Caco-2 (cell line): ENCODE measurements at regions of chr3 and their contacts with region 1.

Region 1: GRCh38 chr3:151918253-151919029 is 45.0 kb downstream of the SUCNR1 start:
- DNase-seq: peak in 1 of 2 experiments; percentile 24
- H3K4me3 ChIP-seq: no peak overlapping the region
- H3K4me3 Mint-ChIP-seq: no peak overlapping the region
- H3K27ac Mint-ChIP-seq: peak overlapping the region; percentile 39
- H3K4me1 ChIP-seq: no peaks in the 10 kb centered on the region
- H3K4me1 Mint-ChIP-seq: peaks cover 6% of the 10 kb centered on the region
- H3K27me3 ChIP-seq: no peaks in the 10 kb centered on the region
- H3K27me3 Mint-ChIP-seq: no peaks in the 10 kb centered on the region
- CTCF ChIP-seq: peak; percentile 48 to 62

Region 2: GRCh38 chr3:151168269-151169094 is 750.0 kb before region 1 on chr3:
- CTCF ChIA-PET with region 1: no interaction called
- POLR2A ChIA-PET with region 1: no interaction called
- intact Hi-C with region 1: loop called (anchors 5 kb)
- DNase-seq: peak; percentile 75 to 84
- H3K4me3 ChIP-seq: no peak overlapping the region
- H3K4me3 Mint-ChIP-seq: no peak overlapping the region
- H3K27ac Mint-ChIP-seq: no peak overlapping the region
- H3K4me1 ChIP-seq: no peaks in the 10 kb centered on the region
- H3K4me1 Mint-ChIP-seq: peaks cover 6% of the 10 kb centered on the region
- H3K27me3 ChIP-seq: no peaks in the 10 kb centered on the region
- H3K27me3 Mint-ChIP-seq: no peaks in the 10 kb centered on the region
- CTCF ChIP-seq: peak; percentile 89 to 94

Region 3: GRCh38 chr3:151290673-151291072 is 627.8 kb before region 1 on chr3:
- CTCF ChIA-PET with region 1: no interaction called
- POLR2A ChIA-PET with region 1: no interaction called
- intact Hi-C with region 1: loop called (anchors 2 kb)
- DNase-seq: no peak
- H3K4me3 ChIP-seq: no peak overlapping the region
- H3K4me3 Mint-ChIP-seq: no peak overlapping the region
- H3K27ac Mint-ChIP-seq: no peak overlapping the region
- H3K4me1 ChIP-seq: peaks cover 5% of the 10 kb centered on the region; the same call in 1 of the 2 replicates
- H3K4me1 Mint-ChIP-seq: no peaks in the 10 kb centered on the region
- H3K27me3 ChIP-seq: no peaks in the 10 kb centered on the region
- H3K27me3 Mint-ChIP-seq: no peaks in the 10 kb centered on the region
- CTCF ChIP-seq: peak in 1 of 2 experiments; percentile 26

Region 4: GRCh38 chr3:151379083-151379734 is 539.2 kb before region 1 on chr3:
- CTCF ChIA-PET with region 1: no interaction called
- POLR2A ChIA-PET with region 1: no interaction called
- intact Hi-C with region 1: loop called (anchors 1 kb)
- DNase-seq: peak; percentile 36 to 50
- H3K4me3 ChIP-seq: no peak overlapping the region
- H3K4me3 Mint-ChIP-seq: no peak overlapping the region
- H3K27ac Mint-ChIP-seq: no peak overlapping the region
- H3K4me1 ChIP-seq: no peaks in the 10 kb centered on the region
- H3K4me1 Mint-ChIP-seq: peaks cover 6% of the 10 kb centered on the region
- H3K27me3 ChIP-seq: no peaks in the 10 kb centered on the region
- H3K27me3 Mint-ChIP-seq: no peaks in the 10 kb centered on the region
- CTCF ChIP-seq: peak; percentile 54 to 85

Region 5: DNA sequence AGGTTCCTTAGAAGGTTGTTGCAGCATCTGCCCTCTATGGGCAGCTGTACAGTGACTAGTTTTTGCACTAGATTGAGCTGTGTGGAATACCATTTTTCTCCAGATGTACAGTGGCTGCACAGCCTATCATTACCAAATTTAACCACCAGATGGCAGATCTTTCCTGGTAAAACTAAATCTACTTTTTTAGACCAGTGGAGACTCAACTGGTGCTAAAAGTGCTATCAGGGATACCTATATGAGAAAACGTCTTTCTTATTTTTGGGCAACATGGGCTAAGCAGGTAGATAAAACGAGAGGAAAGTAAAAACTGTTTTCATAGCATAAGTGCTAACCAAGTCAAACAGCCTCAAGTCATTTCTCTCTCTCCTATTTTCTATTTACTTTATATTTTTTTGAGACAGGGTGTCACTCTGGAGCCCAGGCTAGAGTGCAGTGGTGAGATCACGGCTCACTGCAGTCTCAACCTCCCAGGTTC is 478.8 kb before region 1 on chr3:
- CTCF ChIA-PET with region 1: interaction called, 4 read pairs
- POLR2A ChIA-PET with region 1: no interaction called
- intact Hi-C with region 1: loop called (anchors 1 kb)
- DNase-seq: peak in 1 of 2 experiments; percentile 74
- H3K4me3 ChIP-seq: no peak overlapping the region
- H3K4me3 Mint-ChIP-seq: no peak overlapping the region
- H3K27ac Mint-ChIP-seq: no peak overlapping the region
- H3K4me1 ChIP-seq: no peaks in the 10 kb centered on the region
- H3K4me1 Mint-ChIP-seq: no peaks in the 10 kb centered on the region
- H3K27me3 ChIP-seq: no peaks in the 10 kb centered on the region
- H3K27me3 Mint-ChIP-seq: no peaks in the 10 kb centered on the region
- CTCF ChIP-seq: peak; percentile 57 to 83

Region 6: DNA sequence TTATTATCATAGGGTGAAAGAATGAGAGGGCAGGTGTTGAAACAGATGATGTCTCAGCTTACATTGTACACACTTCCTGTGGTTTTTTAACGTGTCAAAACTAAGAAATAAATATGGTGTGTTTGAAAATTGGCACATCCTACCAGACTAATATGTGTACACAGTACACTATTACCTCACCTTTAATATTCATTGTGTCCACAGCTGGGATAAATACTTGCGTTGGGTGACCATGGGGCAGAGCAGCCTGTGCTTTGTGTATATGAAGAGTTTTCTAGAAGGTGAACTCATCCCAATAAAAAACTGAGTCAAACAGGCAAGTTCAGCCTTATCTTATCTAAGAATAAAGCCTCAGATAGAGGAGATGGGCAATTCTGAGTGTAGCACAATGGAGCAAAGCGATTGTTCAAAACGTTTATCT is 27.7 kb before region 1 on chr3:
- CTCF ChIA-PET with region 1: no interaction called
- POLR2A ChIA-PET with region 1: no interaction called
- intact Hi-C with region 1: loop called (anchors 2 kb)
- DNase-seq: peak; percentile 53 to 59
- H3K4me3 ChIP-seq: no peak overlapping the region
- H3K4me3 Mint-ChIP-seq: no peak overlapping the region
- H3K27ac Mint-ChIP-seq: no peak overlapping the region
- H3K4me1 ChIP-seq: peaks cover 14% of the 10 kb centered on the region
- H3K4me1 Mint-ChIP-seq: peaks cover 10% of the 10 kb centered on the region
- H3K27me3 ChIP-seq: no peaks in the 10 kb centered on the region
- H3K27me3 Mint-ChIP-seq: no peaks in the 10 kb centered on the region
- CTCF ChIP-seq: no peak

Region 7: GRCh38 chr3:151976211-151977050 is 58.0 kb after region 1 on chr3:
- CTCF ChIA-PET with region 1: no interaction called
- POLR2A ChIA-PET with region 1: no interaction called
- intact Hi-C with region 1: no loop called
- DNase-seq: no peak
- H3K4me3 ChIP-seq: no peak overlapping the region
- H3K4me3 Mint-ChIP-seq: no peak overlapping the region
- H3K27ac Mint-ChIP-seq: no peak overlapping the region
- H3K4me1 ChIP-seq: peaks cover 40% of the 10 kb centered on the region
- H3K4me1 Mint-ChIP-seq: peaks cover 22% of the 10 kb centered on the region
- H3K27me3 ChIP-seq: no peaks in the 10 kb centered on the region
- H3K27me3 Mint-ChIP-seq: no peaks in the 10 kb centered on the region
- CTCF ChIP-seq: no peak

Region 8: DNA sequence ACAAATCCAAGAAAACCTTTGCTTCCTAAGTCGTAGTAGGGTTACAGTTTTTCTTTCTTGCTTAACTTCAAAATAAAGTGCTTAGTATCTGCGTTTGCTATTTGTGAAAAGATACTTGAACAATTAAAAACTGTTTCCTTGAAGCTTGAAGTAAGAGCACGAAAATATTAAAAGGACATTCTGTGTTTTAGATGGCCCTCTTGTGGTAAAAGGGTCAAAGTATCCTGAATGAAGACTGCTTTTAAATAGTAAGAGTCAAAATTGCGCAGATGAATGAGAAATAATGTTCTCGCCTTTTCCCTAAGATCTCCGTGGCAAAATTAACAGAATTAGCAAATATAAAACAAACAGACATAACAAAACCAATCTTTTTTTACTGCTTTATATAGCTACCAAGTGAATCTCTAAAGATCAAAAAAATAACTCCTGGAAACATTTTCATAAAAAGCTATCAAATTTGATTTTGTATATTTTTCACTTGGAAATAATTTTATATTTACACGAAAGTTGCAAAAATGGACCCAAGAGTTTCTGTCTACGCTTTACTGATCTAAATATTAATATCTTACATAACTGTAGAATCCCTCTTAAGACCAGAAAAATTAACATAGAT is 525.7 kb after region 1 on chr3:
- CTCF ChIA-PET with region 1: no interaction called
- POLR2A ChIA-PET with region 1: no interaction called
- intact Hi-C with region 1: loop called (anchors 1 kb)
- DNase-seq: peak in 1 of 2 experiments; percentile 12
- H3K4me3 ChIP-seq: no peak overlapping the region
- H3K4me3 Mint-ChIP-seq: no peak overlapping the region
- H3K27ac Mint-ChIP-seq: no peak overlapping the region
- H3K4me1 ChIP-seq: no peaks in the 10 kb centered on the region
- H3K4me1 Mint-ChIP-seq: no peaks in the 10 kb centered on the region
- H3K27me3 ChIP-seq: no peaks in the 10 kb centered on the region
- H3K27me3 Mint-ChIP-seq: no peaks in the 10 kb centered on the region
- CTCF ChIP-seq: peak; percentile 60 to 63